Naive thymus-derived CD8-positive, alpha-beta T cell (primary cell): ENCODE measurements at regions of chr2 and their contacts with region 1.

Region 1: DNA sequence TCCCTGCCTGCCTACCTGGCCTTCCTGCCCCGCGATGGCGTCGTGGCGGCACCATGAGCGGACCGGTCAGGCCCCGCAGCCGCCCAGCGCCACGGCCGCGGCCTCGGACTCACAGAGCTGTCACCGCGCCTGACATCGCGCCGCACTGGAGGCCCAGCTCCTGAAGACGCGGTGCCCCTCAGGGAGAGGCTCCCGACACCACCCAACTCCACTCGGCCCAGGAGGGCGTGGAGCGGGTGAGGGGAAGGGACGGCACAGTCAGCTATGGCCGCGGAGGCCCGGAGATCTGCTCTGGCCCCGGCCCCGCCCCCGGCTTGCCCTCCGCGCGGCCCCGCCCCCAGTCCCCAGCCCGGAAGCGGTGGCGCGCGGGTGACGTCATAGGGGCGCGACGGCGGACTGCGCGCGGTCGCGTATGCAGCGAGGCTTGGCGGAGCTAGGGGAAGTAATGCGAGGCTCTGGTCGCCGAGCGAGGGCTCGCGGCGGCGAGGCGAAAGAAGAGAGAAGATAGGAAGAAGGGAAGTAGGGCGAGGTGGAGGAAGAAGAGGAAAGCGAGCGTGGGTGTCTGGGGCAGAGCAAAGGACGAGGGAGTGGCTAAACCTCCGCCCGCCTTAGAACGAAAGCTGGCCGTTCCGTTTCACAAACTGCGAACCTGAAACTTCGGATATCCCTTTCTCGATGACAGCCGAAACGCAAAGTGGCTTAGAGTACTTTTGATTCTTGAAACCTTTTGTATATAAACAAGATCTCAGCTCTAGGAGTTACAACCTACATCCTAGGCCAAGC is at the start of gene SLC35F5:
- DNase-seq: peak; percentile 85 to 97 (median 94)
- ATAC-seq: peak; percentile 86 to 87
- H3K4me3 Mint-ChIP-seq: peak within 1 kb of the TSS; percentile 86 to 100 (median 98)
- H3K27ac Mint-ChIP-seq: peak within 1 kb of the TSS; percentile 98 to 100 (median 100)
- H3K4me1 Mint-ChIP-seq: peaks cover 7 to 37% (median 22%) of the 10 kb centered on the region in 4 donors
- H3K27me3 Mint-ChIP-seq: peaks cover 0 to under 1% (median 0%) of the 10 kb centered on the region in 5 donors
- polyA plus RNA-seq, gene SLC35F5: 6.2 to 8.2 (median 7.1) TPM

Region 2: DNA sequence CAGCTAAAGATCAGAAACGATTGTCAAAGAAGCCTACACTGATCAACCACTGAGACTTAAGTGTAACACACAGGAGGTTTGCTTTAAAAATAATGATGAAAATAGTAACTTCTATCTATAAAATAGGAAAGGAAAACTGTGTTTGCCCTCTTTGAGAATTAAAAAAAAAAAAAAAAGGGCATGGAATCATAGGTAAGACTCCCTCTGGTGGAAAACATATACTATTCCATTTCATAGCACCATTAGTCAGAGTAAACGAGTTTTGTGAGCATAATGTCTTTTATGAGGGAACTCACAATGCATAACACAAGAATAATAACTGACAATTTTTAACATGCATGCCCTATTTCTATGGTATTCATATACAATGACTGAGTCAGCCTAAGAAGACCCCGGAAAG is 36.4 kb before region 1 on chr2:
- POLR2A ChIA-PET with region 1: no interaction called
- DNase-seq: peak in 1 of 10 donors; percentile 12
- ATAC-seq: no peak
- H3K4me3 Mint-ChIP-seq: no peak overlapping the region
- H3K27ac Mint-ChIP-seq: no peak overlapping the region
- H3K4me1 Mint-ChIP-seq: peaks cover 2 to 5% (median 5%) of the 10 kb centered on the region in 4 donors
- H3K27me3 Mint-ChIP-seq: no peaks in the 10 kb centered on the region

Region 3: GRCh38 chr2:113889471-113890252 is 133.1 kb after region 1 on chr2 and contains the start of gene ACTR3:
- POLR2A ChIA-PET with region 1: interaction called, 28 read pairs
- DNase-seq: peak; percentile 95 to 100 (median 98)
- ATAC-seq: peak; percentile 84 to 88
- H3K4me3 Mint-ChIP-seq: peak within 1 kb of the TSS; percentile 92 to 99 (median 98)
- H3K27ac Mint-ChIP-seq: peak within 1 kb of the TSS; percentile 83 to 99 (median 98)
- H3K4me1 Mint-ChIP-seq: peaks cover 39 to 84% (median 79%) of the 10 kb centered on the region in 4 donors
- H3K27me3 Mint-ChIP-seq: no peaks in the 10 kb centered on the region
- polyA plus RNA-seq, gene ACTR3: 390 to 476 (median 471) TPM